ENCODE measurements at regions of chr12 and their contacts with region 1.

Region 1: DNA sequence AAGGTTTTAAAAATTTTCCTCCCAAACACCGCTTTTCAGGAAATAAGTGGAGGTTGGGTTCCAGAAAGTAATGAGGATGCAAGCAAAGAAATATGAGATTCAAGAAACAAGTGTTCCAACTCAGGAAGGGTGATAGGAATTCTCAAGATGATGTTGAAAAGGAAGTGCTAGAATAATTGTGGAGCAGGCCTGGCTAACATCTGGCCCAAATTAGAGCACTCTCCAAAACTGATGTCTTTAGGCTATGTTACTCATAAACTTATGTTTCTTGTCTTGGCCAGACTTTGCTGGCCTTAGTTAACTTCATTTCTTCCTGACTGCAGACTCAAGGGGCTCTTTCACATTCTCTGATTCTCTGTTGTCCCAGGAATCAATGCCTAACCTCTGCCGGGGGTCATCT is 116.3 kb downstream of the TMTC3 start:
- DNase-seq: no peak
- H3K4me3 ChIP-seq: no peak overlapping the region
- H3K27ac ChIP-seq: no peak overlapping the region
- H3K4me1 ChIP-seq: peaks cover 0 to 10% (median 5%) of the 10 kb centered on the region in 4 donors
- H3K27me3 ChIP-seq: no peaks in the 10 kb centered on the region
- CTCF ChIP-seq: no peak
- EP300 ChIP-seq: no peak
- POLR2A ChIP-seq: no peak

Region 2: GRCh38 chr12:88418856-88419497 is 160.6 kb after region 1 on chr12:
- intact Hi-C with region 1: loop called (anchors 10 kb)
- DNase-seq: no peak
- H3K4me3 ChIP-seq: no peak overlapping the region
- H3K27ac ChIP-seq: peak overlapping the region in 3 of 4 donors; percentile 20 to 47 (median 25)
- H3K4me1 ChIP-seq: peaks cover 0 to 60% (median 29%) of the 10 kb centered on the region in 4 donors
- H3K27me3 ChIP-seq: no peaks in the 10 kb centered on the region
- CTCF ChIP-seq: no peak
- EP300 ChIP-seq: no peak
- POLR2A ChIP-seq: no peak

Region 3: GRCh38 chr12:88579161-88579517 is 320.7 kb after region 1 on chr12:
- intact Hi-C with region 1: loop called (anchors 2 kb)
- DNase-seq: no peak
- H3K4me3 ChIP-seq: peak overlapping the region; percentile 60 to 81 (median 66)
- H3K27ac ChIP-seq: peak overlapping the region; percentile 77 to 86 (median 85)
- H3K4me1 ChIP-seq: peaks cover 0 to 44% (median 34%) of the 10 kb centered on the region in 4 donors
- H3K27me3 ChIP-seq: no peaks in the 10 kb centered on the region
- CTCF ChIP-seq: peak; percentile 23 to 66 (median 60)
- EP300 ChIP-seq: no peak
- POLR2A ChIP-seq: no peak